ENCODE measurements at regions of chr5 and their contacts with region 1.

Region 1: DNA sequence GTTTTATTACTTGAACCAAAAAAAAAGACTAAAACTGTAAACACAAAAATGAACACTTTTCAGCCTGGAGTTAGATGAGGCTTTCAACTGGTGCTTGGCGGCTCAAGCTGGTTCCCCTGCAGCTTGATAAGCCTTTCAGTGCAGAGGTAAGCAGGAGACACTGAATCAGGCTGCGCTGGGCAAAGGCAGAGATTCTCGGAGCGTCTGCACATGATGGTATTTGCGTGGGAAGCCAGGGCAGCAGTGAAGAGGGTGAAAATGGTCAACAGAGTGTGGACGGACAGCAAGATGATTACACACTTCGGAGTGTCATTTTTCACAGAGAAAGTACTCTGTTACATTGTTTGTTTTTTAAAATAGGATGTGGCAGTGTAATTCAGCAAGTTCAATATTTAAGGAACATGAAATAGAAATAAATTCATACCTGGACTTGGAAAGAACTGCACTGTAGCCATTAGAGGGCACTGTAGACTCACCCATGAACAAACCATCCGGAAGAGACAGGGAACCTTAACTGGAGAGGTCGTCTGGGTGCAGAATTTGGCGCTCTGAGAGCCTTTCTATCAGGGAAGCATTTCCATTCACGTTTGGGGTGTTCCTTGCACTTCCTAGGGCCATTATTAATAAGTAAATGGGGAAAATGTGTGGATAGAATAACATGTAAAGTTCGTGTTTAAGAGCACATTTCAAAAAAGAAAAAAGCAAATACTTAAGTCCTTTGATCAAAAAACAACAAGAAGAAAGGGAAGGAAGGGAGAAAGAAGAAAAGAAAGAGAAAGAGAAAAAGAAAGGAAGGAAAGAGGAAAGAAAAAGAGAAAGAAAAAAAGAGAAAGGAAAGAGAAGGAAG is 69.8 kb downstream of the ICE1 start:
- DNase-seq: peak; percentile 37
- H3K4me3 ChIP-seq: no peak overlapping the region
- H3K27ac ChIP-seq: no peak overlapping the region
- H3K4me1 ChIP-seq: peaks cover 3% of the 10 kb centered on the region
- H3K27me3 ChIP-seq: no peaks in the 10 kb centered on the region
- CTCF ChIP-seq: peak; percentile 65 to 72

Region 2: GRCh38 chr5:5699062-5699461 is 206.8 kb after region 1 on chr5:
- CTCF ChIA-PET with region 1: no interaction called
- dilution Hi-C with region 1: no loop called
- in situ Hi-C with region 1: no loop called
- intact Hi-C with region 1: no loop called
- DNase-seq: no peak
- H3K4me3 ChIP-seq: no peak overlapping the region
- H3K27ac ChIP-seq: no peak overlapping the region
- H3K4me1 ChIP-seq: no peaks in the 10 kb centered on the region
- H3K27me3 ChIP-seq: no peaks in the 10 kb centered on the region
- CTCF ChIP-seq: no peak

Region 3: GRCh38 chr5:6291961-6292360 is 799.7 kb after region 1 on chr5:
- CTCF ChIA-PET with region 1: no interaction called
- dilution Hi-C with region 1: no loop called
- in situ Hi-C with region 1: no loop called
- intact Hi-C with region 1: loop called (anchors 1 kb)
- DNase-seq: peak; percentile 2
- H3K4me3 ChIP-seq: no peak overlapping the region
- H3K27ac ChIP-seq: no peak overlapping the region
- H3K4me1 ChIP-seq: no peaks in the 10 kb centered on the region
- H3K27me3 ChIP-seq: no peaks in the 10 kb centered on the region
- CTCF ChIP-seq: peak in 1 of 2 donors; percentile 45

Region 4: DNA sequence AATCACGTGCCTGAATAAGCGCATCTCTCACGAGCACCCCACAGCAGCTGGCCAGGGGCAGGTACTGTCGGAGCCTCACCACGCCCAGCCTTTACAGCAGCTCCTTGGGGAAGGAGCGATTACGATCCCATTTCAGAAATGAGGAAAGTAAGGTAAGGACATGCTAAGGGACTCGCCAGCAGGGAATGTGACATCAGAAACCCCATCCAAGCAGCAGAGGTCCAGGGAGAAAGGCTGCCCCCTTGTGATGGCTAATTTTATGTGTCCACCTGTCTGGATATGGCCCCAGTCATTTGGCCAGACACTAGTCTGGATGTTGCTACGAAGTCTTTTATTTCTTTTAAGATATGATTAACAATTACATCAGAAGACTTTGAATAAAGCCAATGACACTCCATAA is 1033.6 kb after region 1 on chr5:
- CTCF ChIA-PET with region 1: no interaction called
- dilution Hi-C with region 1: no loop called
- in situ Hi-C with region 1: no loop called
- intact Hi-C with region 1: loop called (anchors 1 kb)
- DNase-seq: no peak
- H3K4me3 ChIP-seq: no peak overlapping the region
- H3K27ac ChIP-seq: no peak overlapping the region
- H3K4me1 ChIP-seq: no peaks in the 10 kb centered on the region
- H3K27me3 ChIP-seq: no peaks in the 10 kb centered on the region
- CTCF ChIP-seq: peak; percentile 6 to 41

Region 5: DNA sequence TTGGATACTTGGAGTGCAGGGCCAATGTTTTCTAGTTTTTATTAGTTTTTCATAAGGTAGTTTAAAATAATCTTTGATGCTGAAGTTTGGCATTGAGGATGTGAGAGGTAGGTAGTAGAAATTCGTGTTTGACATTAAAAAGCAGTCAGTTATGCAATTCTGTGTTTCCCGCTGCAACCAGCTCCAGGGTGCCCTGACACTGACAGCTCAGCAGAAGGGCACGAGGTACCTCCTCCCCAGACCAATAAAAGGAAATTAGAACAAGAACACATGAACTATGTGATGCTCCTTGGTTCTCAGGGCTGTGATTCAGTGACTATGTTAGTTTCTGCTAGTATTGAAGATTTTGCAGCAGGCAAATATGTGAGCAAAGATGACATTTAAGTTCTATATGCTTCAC is 1100.3 kb after region 1 on chr5:
- CTCF ChIA-PET with region 1: no interaction called
- dilution Hi-C with region 1: no loop called
- in situ Hi-C with region 1: loop called (anchors 10 to 25 kb)
- intact Hi-C with region 1: no loop called
- DNase-seq: peak; percentile 51
- H3K4me3 ChIP-seq: no peak overlapping the region
- H3K27ac ChIP-seq: no peak overlapping the region
- H3K4me1 ChIP-seq: no peaks in the 10 kb centered on the region
- H3K27me3 ChIP-seq: no peaks in the 10 kb centered on the region
- CTCF ChIP-seq: no peak